Prostate gland (tissue), 2 donors: ENCODE measurements at regions of chr9 and their contacts with region 1.

Region 1: GRCh38 chr9:125549465-125549871 is 157.5 kb downstream of the MAPKAP1 start:
- DNase-seq: peak; percentile 80
- H3K4me3 ChIP-seq: no peak overlapping the region
- H3K27ac ChIP-seq: peak overlapping the region; percentile 2 to 25
- H3K4me1 ChIP-seq: peaks cover 18% of the 10 kb centered on the region
- H3K27me3 ChIP-seq: no peaks in the 10 kb centered on the region
- CTCF ChIP-seq: no peak
- POLR2A ChIP-seq: no peak

Region 2: DNA sequence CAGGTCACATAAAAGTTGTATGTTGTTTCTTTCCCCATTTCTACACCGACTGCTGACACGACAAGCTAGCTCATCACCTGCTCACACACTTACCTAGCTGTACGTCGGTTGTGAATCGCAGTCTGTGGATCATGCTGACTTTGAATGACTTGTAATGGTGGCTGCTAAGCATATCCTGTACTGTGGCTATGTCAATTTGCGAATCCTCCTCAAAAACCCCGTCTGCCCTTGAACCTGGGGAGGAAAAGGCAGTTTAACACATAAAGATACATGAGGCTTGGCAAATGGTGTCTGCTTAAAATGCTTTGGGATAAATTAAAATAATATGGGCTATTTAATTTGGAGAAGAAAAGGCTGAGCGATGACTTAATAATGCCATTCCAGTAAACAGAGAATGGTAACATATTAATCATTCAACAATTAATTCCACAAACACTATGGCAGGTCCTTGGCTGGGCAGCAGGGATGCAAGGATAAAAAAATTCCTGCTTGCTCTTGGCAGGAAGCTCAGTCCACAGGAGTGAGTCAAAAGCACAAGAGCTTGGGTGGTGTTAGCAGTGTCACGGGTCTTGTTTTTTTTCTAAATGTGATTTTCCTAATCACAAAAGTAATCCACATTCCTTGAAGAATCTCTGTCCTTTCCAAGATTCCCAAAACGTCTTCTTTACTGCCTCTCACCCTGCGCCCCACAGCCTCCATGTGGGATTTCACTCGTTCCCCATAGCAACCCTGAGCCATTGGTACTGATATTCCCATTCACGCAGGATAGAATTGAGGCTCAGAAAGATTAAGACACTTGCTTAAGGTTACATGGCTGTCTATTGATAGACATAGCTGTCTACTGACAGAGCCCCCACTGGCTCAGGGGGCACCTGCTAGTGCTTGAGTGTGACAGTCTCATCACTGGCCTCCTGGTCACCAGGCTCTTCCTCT is 64.9 kb before region 1 on chr9:
- intact Hi-C with region 1: loop called (anchors 2 kb)
- DNase-seq: no peak
- H3K4me3 ChIP-seq: no peak overlapping the region
- H3K27ac ChIP-seq: peak overlapping the region; percentile 39 to 47
- H3K4me1 ChIP-seq: peaks cover 7% of the 10 kb centered on the region
- H3K27me3 ChIP-seq: no peaks in the 10 kb centered on the region
- CTCF ChIP-seq: no peak
- POLR2A ChIP-seq: no peak

Region 3: GRCh38 chr9:126690431-126691350 is 1141.2 kb after region 1 on chr9:
- intact Hi-C with region 1: no loop called
- DNase-seq: peak; percentile 27
- H3K4me3 ChIP-seq: no peak overlapping the region
- H3K27ac ChIP-seq: no peak overlapping the region
- H3K4me1 ChIP-seq: no peaks in the 10 kb centered on the region
- H3K27me3 ChIP-seq: peaks cover 16% of the 10 kb centered on the region
- CTCF ChIP-seq: peak; percentile 42 to 73 (median 68)
- POLR2A ChIP-seq: no peak